ENCODE measurements at regions of chr11 and their contacts with region 1.

Region 1: GRCh38 chr11:12087075-12088004 is 23.1 kb upstream of the MICAL2 start:
- DNase-seq: peak; percentile 87
- ATAC-seq: peak; percentile 92
- H3K4me3 Mint-ChIP-seq: peak overlapping the region; percentile 15
- H3K27ac Mint-ChIP-seq: peak overlapping the region; percentile 84
- H3K4me1 Mint-ChIP-seq: peaks cover 70% of the 10 kb centered on the region
- H3K27me3 Mint-ChIP-seq: peaks cover 2% of the 10 kb centered on the region

Region 2: GRCh38 chr11:12071574-12071973 is 15.8 kb before region 1 on chr11:
- CTCF ChIA-PET with region 1: no interaction called
- DNase-seq: no peak
- ATAC-seq: no peak
- H3K4me3 Mint-ChIP-seq: no peak overlapping the region
- H3K27ac Mint-ChIP-seq: no peak overlapping the region
- H3K4me1 Mint-ChIP-seq: peaks cover 9% of the 10 kb centered on the region
- H3K27me3 Mint-ChIP-seq: peaks cover 14% of the 10 kb centered on the region

Region 3: GRCh38 chr11:12102588-12103410 is 15.5 kb after region 1 on chr11:
- CTCF ChIA-PET with region 1: interaction called, 18 read pairs
- DNase-seq: no peak
- ATAC-seq: no peak
- H3K4me3 Mint-ChIP-seq: no peak overlapping the region
- H3K27ac Mint-ChIP-seq: no peak overlapping the region
- H3K4me1 Mint-ChIP-seq: peaks cover 39% of the 10 kb centered on the region
- H3K27me3 Mint-ChIP-seq: peaks cover 18% of the 10 kb centered on the region

Region 4: DNA sequence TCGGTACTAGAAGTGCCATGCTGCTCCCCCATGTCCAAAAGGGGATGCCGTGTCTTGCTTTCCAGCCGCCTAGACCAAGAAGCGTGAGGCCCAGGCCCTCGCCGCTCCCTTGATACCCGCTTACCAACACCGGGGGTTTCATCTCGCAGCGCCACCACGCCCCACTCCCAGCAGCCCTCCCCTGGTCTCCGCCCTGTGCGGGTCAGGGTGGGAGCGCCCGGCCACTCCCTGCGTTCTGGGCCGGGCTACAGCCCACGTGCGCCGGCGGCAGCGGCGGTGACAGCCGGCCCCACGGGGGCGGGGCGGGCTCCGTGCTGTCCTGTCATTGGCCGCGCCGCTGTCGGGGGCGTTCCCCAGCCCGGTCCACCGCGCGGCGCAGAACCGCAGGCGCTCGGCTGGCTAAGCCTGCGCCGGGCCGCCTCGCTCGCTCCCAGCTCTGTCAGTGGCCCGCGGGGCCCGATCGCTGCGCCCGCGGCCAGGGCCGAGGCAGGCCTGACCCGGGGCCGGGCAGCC is 22.9 kb after region 1 on chr11 and contains the start of gene MICAL2:
- CTCF ChIA-PET with region 1: interaction called, 18 read pairs
- DNase-seq: peak; percentile 90
- ATAC-seq: peak; percentile 96
- H3K4me3 Mint-ChIP-seq: peak within 1 kb of the TSS; percentile 80
- H3K27ac Mint-ChIP-seq: peak within 1 kb of the TSS; percentile 90
- H3K4me1 Mint-ChIP-seq: peaks cover 50% of the 10 kb centered on the region
- H3K27me3 Mint-ChIP-seq: no peaks in the 10 kb centered on the region
- total RNA-seq, gene MICAL2: 120 to 168 TPM

Region 5: GRCh38 chr11:12149672-12150225 is 62.4 kb after region 1 on chr11:
- CTCF ChIA-PET with region 1: interaction called, 17 read pairs
- DNase-seq: peak; percentile 78
- ATAC-seq: peak; percentile 50
- H3K4me3 Mint-ChIP-seq: peak overlapping the region; percentile 19
- H3K27ac Mint-ChIP-seq: peak overlapping the region; percentile 92
- H3K4me1 Mint-ChIP-seq: peaks cover 75% of the 10 kb centered on the region
- H3K27me3 Mint-ChIP-seq: no peaks in the 10 kb centered on the region

Region 6: DNA sequence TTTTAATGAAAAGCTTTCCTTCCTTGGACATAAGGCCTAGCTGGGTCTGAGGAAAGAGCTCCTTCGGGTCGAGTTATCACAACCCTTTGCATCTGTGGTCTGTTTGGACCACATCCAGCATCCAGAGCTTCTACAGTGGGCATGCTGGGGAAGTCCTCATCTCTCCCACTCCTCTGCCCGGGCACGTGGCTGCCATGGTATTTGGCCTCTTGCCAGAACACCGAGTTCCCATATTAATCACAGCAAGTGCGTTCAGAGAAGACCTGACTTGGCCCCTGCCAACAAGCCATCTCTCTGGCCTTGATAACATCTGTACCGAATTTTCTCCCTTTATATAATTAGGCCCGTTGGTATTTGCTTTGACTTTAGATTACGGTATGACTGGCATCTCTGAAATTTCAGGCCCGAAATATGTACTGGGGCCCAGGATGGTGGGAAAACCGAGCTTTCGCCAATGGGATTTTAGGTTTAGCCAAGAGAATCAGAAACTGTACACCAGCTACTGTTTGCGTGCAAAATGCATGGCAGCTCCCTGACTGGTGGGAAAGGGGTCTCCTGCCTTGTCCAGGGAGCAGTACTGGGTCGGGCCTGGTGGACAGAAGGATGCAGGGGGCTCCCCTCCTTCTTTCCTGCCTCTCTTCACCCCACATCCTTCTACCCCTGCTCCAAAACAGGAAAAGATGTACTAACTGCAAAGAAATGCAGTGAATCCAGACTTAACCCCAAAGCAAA is 113.1 kb after region 1 on chr11:
- CTCF ChIA-PET with region 1: interaction called, 14 read pairs
- DNase-seq: no peak
- ATAC-seq: no peak
- H3K4me3 Mint-ChIP-seq: no peak overlapping the region
- H3K27ac Mint-ChIP-seq: peak overlapping the region; percentile 96
- H3K4me1 Mint-ChIP-seq: peaks cover 71% of the 10 kb centered on the region
- H3K27me3 Mint-ChIP-seq: no peaks in the 10 kb centered on the region

Region 7: GRCh38 chr11:12224537-12224893 is 137.2 kb after region 1 on chr11:
- CTCF ChIA-PET with region 1: interaction called, 19 read pairs
- DNase-seq: peak; percentile 98
- ATAC-seq: peak; percentile 94
- H3K4me3 Mint-ChIP-seq: peak overlapping the region; percentile 57
- H3K27ac Mint-ChIP-seq: peak overlapping the region; percentile 96
- H3K4me1 Mint-ChIP-seq: peaks cover 52% of the 10 kb centered on the region
- H3K27me3 Mint-ChIP-seq: no peaks in the 10 kb centered on the region

Region 8: DNA sequence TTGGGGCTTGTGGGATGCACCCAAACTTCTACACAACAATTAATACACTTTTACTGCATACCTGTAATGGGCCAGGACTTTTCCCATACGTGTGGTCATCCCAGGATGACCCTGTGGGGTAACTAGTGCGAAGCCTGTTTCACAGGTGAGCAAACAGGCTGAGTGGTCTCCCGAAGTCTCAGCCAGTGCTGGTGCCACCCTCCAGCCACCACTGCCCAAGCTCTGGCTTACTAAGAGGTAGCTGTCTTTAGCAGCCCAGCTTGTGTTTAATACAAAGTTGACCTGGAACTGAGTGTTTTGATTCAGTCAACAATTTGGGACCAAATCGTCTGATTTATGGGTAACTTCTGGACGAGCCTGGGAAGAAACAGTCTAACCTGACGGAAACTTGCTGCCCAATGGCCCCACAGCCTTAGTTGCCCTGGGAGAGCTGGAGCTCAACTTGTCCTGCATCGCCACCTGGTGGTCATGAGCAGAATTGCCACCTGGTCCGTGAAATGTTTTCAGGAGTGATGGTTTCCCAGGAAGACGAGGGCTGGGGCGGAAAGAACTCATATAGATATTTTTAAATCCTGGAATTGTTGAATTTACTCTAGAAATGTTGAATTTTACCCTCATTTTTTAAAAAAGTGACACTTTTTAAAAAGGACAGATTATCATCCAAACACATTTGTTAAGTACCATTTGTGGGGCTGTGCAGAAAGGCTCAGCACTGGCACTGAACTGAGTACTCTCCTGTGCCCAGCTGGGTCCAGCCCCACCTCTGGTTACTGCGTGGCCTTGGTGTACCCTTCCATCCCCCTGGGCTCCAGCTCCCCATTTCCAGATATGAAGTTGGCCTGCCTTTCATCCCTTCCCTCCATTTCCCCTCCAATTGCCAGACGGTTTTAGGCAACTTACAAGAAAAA is 194.5 kb after region 1 on chr11:
- CTCF ChIA-PET with region 1: interaction called, 12 read pairs
- DNase-seq: peak; percentile 84
- ATAC-seq: peak; percentile 77
- H3K4me3 Mint-ChIP-seq: no peak overlapping the region
- H3K27ac Mint-ChIP-seq: no peak overlapping the region
- H3K4me1 Mint-ChIP-seq: peaks cover 3% of the 10 kb centered on the region
- H3K27me3 Mint-ChIP-seq: no peaks in the 10 kb centered on the region

Measured in activated CD8-positive, alpha-beta memory T cell treated with anti-CD3 and anti-CD28 coated beads, Interleukin-2, amount 10 ng/mL, durations not matched to agents 7 days and 5 days (primary cell).